Activated naive CD4-positive, alpha-beta T cell treated with anti-CD3 and anti-CD28 coated beads for 36 hours (primary cell): ENCODE measurements at regions of chr1 and their contacts with region 1.

Region 1: DNA sequence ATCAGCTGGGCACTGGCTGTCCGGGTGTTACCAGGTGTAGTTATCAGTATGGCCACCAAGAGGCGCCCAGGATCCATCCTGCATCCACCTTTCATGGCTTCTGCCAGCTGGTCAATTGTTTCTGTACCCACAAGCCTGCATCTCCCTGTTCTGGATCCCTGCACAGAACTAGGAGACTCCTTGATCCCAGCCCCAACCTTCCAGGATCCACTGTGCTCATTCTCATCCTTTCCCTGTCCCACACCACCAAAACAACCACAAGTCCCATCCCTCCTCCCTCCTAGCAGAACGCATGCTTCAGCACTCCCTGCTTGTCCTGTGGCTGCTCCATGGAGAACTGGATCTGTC is 27.2 kb upstream of the FOXE3 start:
- DNase-seq: peak; percentile 70
- H3K4me3 Mint-ChIP-seq: no peak overlapping the region
- H3K27ac Mint-ChIP-seq: no peak overlapping the region
- H3K4me1 Mint-ChIP-seq: no peaks in the 10 kb centered on the region
- H3K27me3 Mint-ChIP-seq: peaks cover 7% of the 10 kb centered on the region

Region 2: GRCh38 chr1:47313915-47314664 is 74.8 kb before region 1 on chr1 and contains the start of gene STIL:
- CTCF ChIA-PET with region 1: no interaction called
- intact Hi-C with region 1: no loop called
- DNase-seq: peak; percentile 99
- H3K4me3 Mint-ChIP-seq: peak within 1 kb of the TSS; percentile 96
- H3K27ac Mint-ChIP-seq: peak within 1 kb of the TSS; percentile 95
- H3K4me1 Mint-ChIP-seq: peaks cover 10% of the 10 kb centered on the region
- H3K27me3 Mint-ChIP-seq: no peaks in the 10 kb centered on the region
- total RNA-seq, gene STIL: 41.4 to 43.5 TPM

Region 3: GRCh38 chr1:47424336-47424982 is 35.6 kb after region 1 on chr1:
- CTCF ChIA-PET with region 1: interaction called, 9 read pairs
- intact Hi-C with region 1: loop called (anchors 2 kb)
- DNase-seq: peak; percentile 34
- H3K4me3 Mint-ChIP-seq: no peak overlapping the region
- H3K27ac Mint-ChIP-seq: no peak overlapping the region
- H3K4me1 Mint-ChIP-seq: peaks cover 2% of the 10 kb centered on the region
- H3K27me3 Mint-ChIP-seq: peaks cover 42% of the 10 kb centered on the region